Colonic mucosa (tissue), 4 donors: ENCODE measurements at regions of chrX and their contacts with region 1.

Region 1: DNA sequence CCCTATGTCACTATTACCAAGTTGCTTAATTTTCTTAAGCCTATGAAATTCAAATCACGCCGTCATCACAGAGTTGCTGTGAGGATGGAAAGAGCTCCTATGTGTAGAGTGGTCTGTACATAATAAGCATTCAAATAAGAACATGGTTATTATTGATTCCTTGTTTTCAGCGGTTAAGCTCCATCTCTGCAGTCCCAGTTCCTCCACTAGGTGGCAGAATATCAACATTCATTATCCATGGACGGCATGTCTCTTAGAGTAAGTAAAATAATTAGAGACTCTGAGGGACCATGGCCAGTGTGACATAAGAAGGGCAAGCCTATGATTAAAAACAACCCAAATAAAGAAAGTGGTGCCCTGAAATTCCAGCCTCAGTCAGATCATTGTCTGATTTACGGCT is 132.5 kb upstream of the NHS start:
- DNase-seq: peak; percentile 53
- H3K4me3 ChIP-seq: no peak overlapping the region
- H3K27ac ChIP-seq: no peak overlapping the region
- H3K4me1 ChIP-seq: no peaks in the 10 kb centered on the region
- H3K27me3 ChIP-seq: no peaks in the 10 kb centered on the region
- CTCF ChIP-seq: peak; percentile 68

Region 2: DNA sequence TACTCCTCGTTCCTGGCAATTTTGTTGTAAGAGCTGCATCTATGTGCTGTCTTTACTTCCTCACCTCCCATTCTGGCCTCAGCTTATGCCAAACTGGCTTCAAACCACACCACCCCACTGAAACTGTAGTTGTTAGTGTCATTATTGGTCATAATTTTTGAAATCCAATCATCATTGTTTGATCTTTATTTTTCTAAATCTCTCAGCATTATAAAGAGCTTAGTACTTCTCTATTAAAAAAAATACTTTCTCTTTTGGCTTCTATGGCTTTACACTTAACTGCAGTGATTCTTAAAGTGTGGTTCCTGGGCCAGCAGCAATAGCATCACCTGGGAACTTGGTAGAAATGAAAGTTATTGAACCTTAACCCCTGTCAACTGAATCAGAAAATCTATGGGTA is 1202.6 kb before region 1 on chrX:
- intact Hi-C with region 1: no loop called
- DNase-seq: no peak
- H3K4me3 ChIP-seq: no peak overlapping the region
- H3K27ac ChIP-seq: no peak overlapping the region
- H3K4me1 ChIP-seq: no peaks in the 10 kb centered on the region
- H3K27me3 ChIP-seq: no peaks in the 10 kb centered on the region
- CTCF ChIP-seq: no peak

Region 3: DNA sequence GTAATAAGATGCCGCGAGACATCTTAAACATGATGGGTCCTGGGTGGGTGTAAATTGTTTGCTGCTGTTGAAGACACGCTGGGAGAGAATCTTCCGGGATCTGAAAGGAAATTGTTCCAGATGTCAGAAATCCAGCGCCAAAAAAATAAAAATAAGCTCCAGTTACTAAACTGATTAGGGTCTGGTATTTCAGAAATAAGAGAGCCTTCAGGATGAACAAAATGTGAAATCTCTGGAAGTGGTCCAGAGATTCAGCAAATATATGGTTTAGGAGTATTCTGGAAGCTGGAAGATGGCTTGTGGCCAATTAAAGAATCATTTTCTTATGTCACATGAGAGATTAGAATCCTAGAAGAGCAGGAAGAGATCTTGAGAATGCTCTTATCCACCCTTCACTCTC is 56.7 kb after region 1 on chrX:
- intact Hi-C with region 1: no loop called
- DNase-seq: no peak
- H3K4me3 ChIP-seq: no peak overlapping the region
- H3K27ac ChIP-seq: no peak overlapping the region
- H3K4me1 ChIP-seq: no peaks in the 10 kb centered on the region
- H3K27me3 ChIP-seq: no peaks in the 10 kb centered on the region
- CTCF ChIP-seq: no peak

Region 4: DNA sequence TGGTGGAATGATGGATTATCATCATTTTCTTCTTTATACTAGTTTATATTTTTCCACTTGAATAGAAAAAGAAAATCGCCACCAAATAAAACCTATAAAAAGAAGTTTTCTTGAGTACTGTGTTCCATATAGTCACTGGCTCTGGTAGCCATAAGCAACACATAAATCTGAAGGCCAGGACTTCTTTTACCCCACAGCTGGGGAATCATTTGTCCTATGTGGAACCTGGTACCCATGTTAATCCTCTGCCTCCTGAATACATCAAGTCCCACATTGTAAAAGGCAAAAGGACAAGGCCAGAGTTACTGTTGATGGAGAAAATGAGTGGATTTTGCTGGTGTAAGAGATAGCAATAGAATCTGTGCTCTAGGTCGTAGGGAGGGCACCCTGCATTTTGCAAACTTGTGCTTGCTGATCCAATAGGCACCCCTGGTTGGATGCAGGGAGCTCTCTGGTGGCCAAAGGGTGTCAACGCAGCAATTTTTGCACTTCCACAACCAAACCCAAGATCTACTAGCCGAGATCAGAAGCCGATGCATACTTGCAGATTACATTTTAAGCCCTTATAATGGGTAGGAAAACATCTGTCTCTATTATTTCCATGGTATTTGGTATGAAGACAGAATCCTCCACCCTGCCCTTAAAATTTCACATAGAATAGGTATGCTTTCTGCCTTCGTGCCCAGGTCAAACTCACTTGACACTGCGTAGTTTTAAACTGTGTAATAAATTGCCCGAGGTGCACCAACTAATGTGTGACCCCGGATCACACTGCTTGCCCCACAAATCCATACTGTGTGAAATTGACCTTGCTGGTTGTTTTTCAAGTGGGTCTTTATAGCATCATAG is 348.6 kb after region 1 on chrX:
- intact Hi-C with region 1: loop called (anchors 5 kb)
- DNase-seq: peak; percentile 64
- H3K4me3 ChIP-seq: no peak overlapping the region
- H3K27ac ChIP-seq: no peak overlapping the region
- H3K4me1 ChIP-seq: no peaks in the 10 kb centered on the region
- H3K27me3 ChIP-seq: no peaks in the 10 kb centered on the region
- CTCF ChIP-seq: peak; percentile 52